ENCODE measurements at regions of chr18 and their contacts with region 1.

Region 1: GRCh38 chr18:10525371-10526210 is at the start of gene NAPG:
- H3K4me3 Mint-ChIP-seq: peak within 1 kb of the TSS; percentile 95
- H3K27ac Mint-ChIP-seq: peak within 1 kb of the TSS; percentile 94
- H3K4me1 Mint-ChIP-seq: peaks cover 44% of the 10 kb centered on the region
- H3K27me3 Mint-ChIP-seq: peaks cover 2% of the 10 kb centered on the region

Region 2: GRCh38 chr18:9913526-9914333 is 611.9 kb before region 1 on chr18 and contains the start of gene VAPA:
- intact Hi-C with region 1: loop called (anchors 5 kb)
- H3K4me3 Mint-ChIP-seq: peak within 1 kb of the TSS; percentile 91
- H3K27ac Mint-ChIP-seq: peak within 1 kb of the TSS; percentile 95
- H3K4me1 Mint-ChIP-seq: peaks cover 43% of the 10 kb centered on the region
- H3K27me3 Mint-ChIP-seq: no peaks in the 10 kb centered on the region

Region 3: DNA sequence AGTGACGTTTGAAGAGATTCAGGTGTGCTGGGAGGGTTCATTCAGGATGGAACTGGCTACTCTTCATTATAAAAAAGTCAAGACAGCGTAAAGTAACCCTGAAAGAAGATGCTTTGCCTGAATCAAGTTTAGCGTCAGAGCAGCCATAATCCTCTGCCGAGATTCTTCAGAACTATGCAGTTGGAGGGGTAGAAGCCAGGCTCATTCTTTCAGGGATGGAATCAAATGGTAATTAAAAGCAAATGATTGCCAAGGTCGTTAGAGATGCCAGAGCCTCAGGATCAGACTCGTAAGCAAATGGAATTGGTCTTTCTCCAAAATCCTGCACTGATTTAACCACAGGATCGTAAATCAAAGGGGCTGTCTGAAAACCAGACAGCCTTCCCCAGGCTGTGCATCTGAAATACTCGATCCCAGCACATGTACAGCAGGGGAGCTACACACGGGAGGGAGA is 49.2 kb before region 1 on chr18:
- intact Hi-C with region 1: no loop called
- H3K4me3 Mint-ChIP-seq: no peak overlapping the region
- H3K27ac Mint-ChIP-seq: no peak overlapping the region
- H3K4me1 Mint-ChIP-seq: peaks cover 62% of the 10 kb centered on the region
- H3K27me3 Mint-ChIP-seq: peaks cover 19% of the 10 kb centered on the region